GM12878 (cell line): ENCODE measurements at regions of chr3 and their contacts with region 1.

Region 1: GRCh38 chr3:128969993-128970739 is 23.7 kb downstream of the CFAP92 start:
- DNase-seq: no peak
- ATAC-seq: peak; percentile 82
- H3K4me3 ChIP-seq: no peak overlapping the region
- H3K27ac ChIP-seq: no peak overlapping the region
- H3K4me1 ChIP-seq: no peaks in the 10 kb centered on the region
- H3K27me3 ChIP-seq: peaks cover 0 to 2% of the 10 kb centered on the region in 2 experiments; a peak in 1 of 4 replicates
- CTCF ChIP-seq: peak; percentile 87 to 91 (median 89)
- EP300 ChIP-seq: no peak
- POLR2A ChIP-seq: no peak
- RAD21 ChIP-seq: peak; percentile 94

Region 2: GRCh38 chr3:128845778-128846485 is 124.2 kb before region 1 on chr3:
- CTCF ChIA-PET with region 1: no interaction called
- POLR2A ChIA-PET with region 1: no interaction called
- RAD21 ChIA-PET with region 1: no interaction called
- SMC1A ChIA-PET with region 1: no interaction called
- in situ Hi-C with region 1: no loop called
- intact Hi-C with region 1: no loop called
- DNase-seq: peak; percentile 7
- ATAC-seq: peak; percentile 97
- H3K4me3 ChIP-seq: peak overlapping the region; percentile 46
- H3K27ac ChIP-seq: no peak overlapping the region
- H3K4me1 ChIP-seq: peaks cover 4% of the 10 kb centered on the region
- H3K27me3 ChIP-seq: no peaks in the 10 kb centered on the region
- CTCF ChIP-seq: peak; percentile 48 to 78 (median 63)
- EP300 ChIP-seq: no peak
- POLR2A ChIP-seq: 0 out of 2 replicates have a peak, but pooled peaks have one; percentile 48
- RAD21 ChIP-seq: peak; percentile 58

Region 3: GRCh38 chr3:128956440-128956839 is 13.7 kb before region 1 on chr3:
- CTCF ChIA-PET with region 1: interaction called, 11 read pairs
- POLR2A ChIA-PET with region 1: no interaction called
- RAD21 ChIA-PET with region 1: no interaction called
- SMC1A ChIA-PET with region 1: no interaction called
- in situ Hi-C with region 1: no loop called
- intact Hi-C with region 1: no loop called
- DNase-seq: no peak
- ATAC-seq: no peak
- H3K4me3 ChIP-seq: no peak overlapping the region
- H3K27ac ChIP-seq: no peak overlapping the region
- H3K4me1 ChIP-seq: no peaks in the 10 kb centered on the region
- H3K27me3 ChIP-seq: no peaks in the 10 kb centered on the region
- CTCF ChIP-seq: no peak
- EP300 ChIP-seq: no peak
- POLR2A ChIP-seq: no peak
- RAD21 ChIP-seq: no peak

Region 4: DNA sequence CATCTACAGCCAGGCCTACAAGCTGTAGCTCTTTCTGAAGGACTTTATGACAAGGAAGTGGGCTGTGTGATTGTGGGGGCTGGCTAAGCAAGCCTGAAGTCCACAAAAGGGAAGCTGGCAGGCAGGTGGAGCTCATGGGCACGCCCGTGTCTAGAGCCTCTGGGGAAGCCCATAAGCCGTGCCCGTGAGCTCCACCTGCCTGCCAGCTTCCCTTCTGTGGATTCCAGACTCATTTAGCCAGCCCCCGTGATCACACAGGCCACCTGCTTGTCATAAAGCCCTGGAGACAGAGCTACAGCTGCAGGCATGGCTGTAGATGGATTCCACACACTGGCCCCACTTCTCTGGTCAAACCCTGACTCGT is 46.2 kb after region 1 on chr3:
- CTCF ChIA-PET with region 1: interaction called, 32 read pairs
- POLR2A ChIA-PET with region 1: no interaction called
- RAD21 ChIA-PET with region 1: interaction called, 26 read pairs
- SMC1A ChIA-PET with region 1: interaction called, 22 read pairs
- in situ Hi-C with region 1: no loop called
- intact Hi-C with region 1: no loop called
- DNase-seq: no peak
- ATAC-seq: peak; percentile 77
- H3K4me3 ChIP-seq: no peak overlapping the region
- H3K27ac ChIP-seq: no peak overlapping the region
- H3K4me1 ChIP-seq: peaks cover 19% of the 10 kb centered on the region
- H3K27me3 ChIP-seq: no peaks in the 10 kb centered on the region
- CTCF ChIP-seq: peak in 1 of 3 experiments; percentile 12; a peak in 1 of 6 replicates
- EP300 ChIP-seq: no peak
- POLR2A ChIP-seq: no peak
- RAD21 ChIP-seq: no peak

Region 5: DNA sequence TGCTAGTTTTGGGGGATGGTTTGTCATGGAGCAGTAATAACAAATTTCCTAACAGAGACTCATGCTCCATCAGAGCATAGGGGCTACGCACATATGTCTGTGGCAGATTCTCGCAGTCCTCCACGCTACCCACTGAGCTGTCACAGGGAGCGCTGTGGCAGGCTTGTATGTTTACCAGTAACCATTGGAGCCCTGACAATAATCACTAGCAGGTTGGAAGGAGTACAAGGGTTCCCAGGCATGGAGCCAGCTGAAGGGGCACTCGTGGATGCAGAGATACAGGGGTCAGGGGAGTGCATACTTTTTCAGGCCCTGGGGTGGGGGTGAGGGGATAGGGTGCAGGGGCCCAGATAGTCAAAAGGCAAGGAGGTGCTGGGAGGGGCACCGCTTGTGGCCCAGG is 82.5 kb after region 1 on chr3:
- CTCF ChIA-PET with region 1: interaction called, 37 read pairs
- POLR2A ChIA-PET with region 1: no interaction called
- RAD21 ChIA-PET with region 1: interaction called, 16 read pairs
- SMC1A ChIA-PET with region 1: interaction called, 20 read pairs
- in situ Hi-C with region 1: no loop called
- intact Hi-C with region 1: loop called (anchors 1 kb)
- DNase-seq: no peak
- ATAC-seq: no peak
- H3K4me3 ChIP-seq: no peak overlapping the region
- H3K27ac ChIP-seq: no peak overlapping the region
- H3K4me1 ChIP-seq: no peaks in the 10 kb centered on the region
- H3K27me3 ChIP-seq: no peaks in the 10 kb centered on the region; a peak in 1 of 4 replicates
- CTCF ChIP-seq: no peak
- EP300 ChIP-seq: no peak
- POLR2A ChIP-seq: no peak
- RAD21 ChIP-seq: no peak

Region 6: GRCh38 chr3:129160891-129161859 is 191.0 kb after region 1 on chr3 and contains the start of gene ISY1:
- CTCF ChIA-PET with region 1: interaction called, 20 read pairs
- POLR2A ChIA-PET with region 1: interaction called, 4 read pairs
- RAD21 ChIA-PET with region 1: interaction called, 7 read pairs
- SMC1A ChIA-PET with region 1: interaction called, 4 read pairs
- in situ Hi-C with region 1: no loop called
- intact Hi-C with region 1: loop called (anchors 1 kb)
- DNase-seq: peak; percentile 87
- ATAC-seq: peak; percentile 87
- H3K4me3 ChIP-seq: peak within 1 kb of the TSS; percentile 99
- H3K27ac ChIP-seq: peak within 1 kb of the TSS; percentile 100
- H3K4me1 ChIP-seq: peaks cover 4% of the 10 kb centered on the region
- H3K27me3 ChIP-seq: no peaks in the 10 kb centered on the region
- CTCF ChIP-seq: peak; percentile 79 to 86 (median 80)
- EP300 ChIP-seq: peak in 1 of 2 experiments; percentile 61; a peak in 2 of 4 replicates
- POLR2A ChIP-seq: peak; percentile 94
- RAD21 ChIP-seq: peak; percentile 54
- polyA plus RNA-seq, gene ISY1: 54.1 to 58.2 TPM

Region 7: DNA sequence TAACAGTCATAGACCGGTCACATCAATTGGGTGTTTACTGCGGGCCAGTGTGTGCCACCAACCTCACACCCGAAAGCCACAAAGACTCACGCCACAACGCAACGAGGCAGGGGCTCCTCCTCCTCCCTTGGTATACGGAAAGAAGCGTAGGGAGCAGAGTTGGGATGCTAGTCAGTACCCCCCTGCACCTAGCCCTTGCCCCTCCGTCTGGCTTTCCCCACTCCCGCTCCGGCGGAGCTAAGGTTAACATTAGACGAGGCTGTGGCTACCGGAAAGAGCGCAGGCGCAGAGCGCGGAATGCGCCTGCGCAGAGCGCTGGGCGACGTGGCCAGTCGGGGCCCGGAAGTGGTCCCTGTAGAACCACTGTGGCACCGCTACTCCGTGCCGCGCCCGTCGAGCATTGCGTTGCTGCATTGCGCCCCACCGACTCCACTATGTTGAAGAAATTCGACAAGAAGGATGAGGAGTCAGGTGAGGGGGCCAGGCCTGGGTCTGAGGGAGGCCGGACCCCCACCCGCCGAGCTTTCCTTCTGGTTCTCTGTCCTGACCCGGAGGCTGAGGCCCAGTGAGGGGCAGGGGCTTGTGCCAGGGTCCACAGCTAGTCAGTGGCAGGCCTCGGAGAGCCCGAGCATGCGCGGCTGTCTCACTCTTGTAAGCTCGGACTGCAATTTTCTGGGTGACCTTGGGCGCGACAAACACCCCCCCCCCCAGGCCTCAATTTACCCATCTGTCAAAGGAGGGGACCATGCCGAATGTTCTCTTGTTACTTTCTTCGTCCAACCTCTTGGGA is 279.3 kb after region 1 on chr3 and contains the start of gene COPG1:
- CTCF ChIA-PET with region 1: interaction called, 120 read pairs
- POLR2A ChIA-PET with region 1: interaction called, 4 read pairs
- RAD21 ChIA-PET with region 1: interaction called, 50 read pairs
- SMC1A ChIA-PET with region 1: interaction called, 53 read pairs
- in situ Hi-C with region 1: loop called (anchors 5 kb)
- intact Hi-C with region 1: loop called (anchors 1 kb)
- DNase-seq: peak; percentile 72
- ATAC-seq: peak; percentile 92
- H3K4me3 ChIP-seq: peak within 1 kb of the TSS; percentile 84
- H3K27ac ChIP-seq: peak within 1 kb of the TSS; percentile 94
- H3K4me1 ChIP-seq: peaks cover 8% of the 10 kb centered on the region
- H3K27me3 ChIP-seq: no peaks in the 10 kb centered on the region
- CTCF ChIP-seq: no peak
- EP300 ChIP-seq: no peak
- POLR2A ChIP-seq: peak; percentile 98
- RAD21 ChIP-seq: no peak
- polyA plus RNA-seq, gene COPG1: 54.8 to 102 TPM